Heart right ventricle (tissue), 16 donors: ENCODE measurements at regions of chr6 and their contacts with region 1.

Region 1: DNA sequence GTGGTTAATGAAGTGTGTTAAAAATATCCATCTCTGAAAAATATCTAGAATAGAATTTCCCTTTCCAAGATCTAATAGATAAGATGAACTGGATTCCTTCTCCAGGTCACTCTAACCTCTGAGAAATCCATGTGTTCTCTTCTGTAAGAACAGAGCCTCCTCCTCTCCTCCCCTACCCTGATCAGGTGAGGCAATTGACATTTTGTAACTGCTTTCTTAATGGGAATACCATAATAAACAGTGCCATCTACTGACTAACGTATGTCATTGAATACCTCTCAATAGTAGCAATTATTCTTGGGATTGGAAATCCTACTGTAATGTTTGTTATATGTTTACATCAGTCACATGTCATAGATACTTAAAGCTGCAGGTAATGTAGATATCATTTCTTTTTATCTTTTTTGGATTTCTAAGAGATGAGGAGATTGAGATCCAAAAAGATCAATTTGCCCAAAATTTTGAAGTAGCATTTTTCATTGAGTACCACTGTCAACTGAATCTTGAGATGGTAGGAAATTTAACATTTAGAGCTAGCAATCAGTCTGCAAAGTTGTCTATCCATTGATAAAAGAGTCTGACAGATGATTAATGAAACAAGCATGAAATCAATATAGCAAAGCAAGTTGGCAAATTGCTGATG is 365.8 kb upstream of the HSF2 start:
- DNase-seq: no peak
- ATAC-seq: peak; percentile 70 to 91 (median 86)
- H3K4me3 ChIP-seq: no peak overlapping the region
- H3K27ac ChIP-seq: peak overlapping the region in 2 of 10 donors; percentile 19 to 35
- H3K4me1 ChIP-seq: peaks cover 0 to 9% (median 0%) of the 10 kb centered on the region in 9 donors
- H3K27me3 ChIP-seq: no peaks in the 10 kb centered on the region
- CTCF ChIP-seq: peak; percentile 20 to 80 (median 65)

Region 2: DNA sequence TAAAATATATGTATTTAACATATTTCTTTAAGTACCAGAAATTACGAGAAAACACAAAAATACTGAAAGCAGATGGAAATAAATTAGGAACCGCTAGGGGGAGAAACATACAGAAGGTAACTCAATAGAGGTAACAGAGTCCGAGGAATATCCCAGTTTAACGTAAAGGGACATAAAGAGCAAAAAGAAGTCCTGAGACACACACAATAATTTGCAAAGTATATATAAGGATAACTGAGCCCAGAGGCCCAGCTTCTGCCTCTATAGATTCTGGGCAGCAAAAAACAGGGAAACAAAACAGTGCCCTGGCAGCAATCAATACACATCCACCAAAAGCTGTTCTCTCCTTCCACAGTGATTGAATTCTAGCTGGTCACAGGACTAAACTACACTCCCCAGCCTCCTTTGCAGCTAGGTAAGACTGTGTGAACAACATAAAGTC is 714.5 kb before region 1 on chr6:
- intact Hi-C with region 1: loop called in 1 of 10 experiments (anchors 10 kb)
- DNase-seq: no peak
- ATAC-seq: peak in 2 of 8 donors; percentile 42 to 53
- H3K4me3 ChIP-seq: peak overlapping the region in 4 of 10 donors; percentile 11 to 37 (median 22)
- H3K27ac ChIP-seq: no peak overlapping the region
- H3K4me1 ChIP-seq: no peaks in the 10 kb centered on the region
- H3K27me3 ChIP-seq: no peaks in the 10 kb centered on the region
- CTCF ChIP-seq: peak; percentile 14 to 59 (median 48)

Region 3: DNA sequence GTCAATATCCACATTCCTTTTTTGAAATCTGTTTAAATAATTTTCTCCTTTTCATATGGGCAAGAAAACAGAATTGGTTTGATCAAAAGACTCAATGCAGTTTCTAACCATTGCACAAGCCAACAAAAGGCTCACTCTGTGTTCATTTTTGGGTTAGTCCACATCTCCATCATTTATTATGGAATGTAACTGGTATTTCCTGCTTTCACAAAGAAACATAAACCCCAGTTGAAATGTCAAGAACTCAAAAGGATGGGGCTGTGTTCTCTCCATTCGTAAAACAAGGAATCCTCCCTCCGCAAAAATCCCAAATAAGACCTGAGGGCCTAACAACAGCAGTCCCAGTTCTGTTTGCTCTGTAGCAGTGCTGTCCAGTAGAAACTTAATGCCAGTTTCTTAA is 177.4 kb before region 1 on chr6:
- intact Hi-C with region 1: loop called in 6 of 10 experiments (anchors 5 to 10 kb)
- DNase-seq: no peak
- ATAC-seq: no peak
- H3K4me3 ChIP-seq: no peak overlapping the region
- H3K27ac ChIP-seq: no peak overlapping the region
- H3K4me1 ChIP-seq: peaks cover 0 to 9% (median 0%) of the 10 kb centered on the region in 9 donors
- H3K27me3 ChIP-seq: no peaks in the 10 kb centered on the region
- CTCF ChIP-seq: no peak

Region 4: DNA sequence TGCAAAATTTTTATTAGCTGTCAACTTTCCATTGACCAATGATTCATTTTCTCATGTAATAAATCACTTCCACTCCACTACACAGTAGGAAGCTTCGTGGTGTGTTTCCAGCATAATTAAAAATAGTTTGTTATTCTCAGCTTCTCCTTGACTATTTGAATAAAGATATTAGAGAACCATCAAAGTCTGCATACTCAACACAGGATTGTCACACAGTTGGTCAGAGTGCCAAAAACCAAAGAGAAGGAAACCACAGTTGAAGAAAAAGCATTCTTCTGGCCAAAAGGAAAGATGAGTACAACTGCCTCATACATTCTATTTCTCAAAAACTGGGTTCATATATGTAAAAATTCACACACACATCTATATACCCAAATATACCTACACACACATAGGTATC is 89.3 kb before region 1 on chr6:
- intact Hi-C with region 1: no loop called
- DNase-seq: no peak
- ATAC-seq: no peak
- H3K4me3 ChIP-seq: no peak overlapping the region
- H3K27ac ChIP-seq: no peak overlapping the region
- H3K4me1 ChIP-seq: no peaks in the 10 kb centered on the region
- H3K27me3 ChIP-seq: no peaks in the 10 kb centered on the region
- CTCF ChIP-seq: no peak